ENCODE measurements at regions of chr10 and their contacts with region 1.

Region 1: DNA sequence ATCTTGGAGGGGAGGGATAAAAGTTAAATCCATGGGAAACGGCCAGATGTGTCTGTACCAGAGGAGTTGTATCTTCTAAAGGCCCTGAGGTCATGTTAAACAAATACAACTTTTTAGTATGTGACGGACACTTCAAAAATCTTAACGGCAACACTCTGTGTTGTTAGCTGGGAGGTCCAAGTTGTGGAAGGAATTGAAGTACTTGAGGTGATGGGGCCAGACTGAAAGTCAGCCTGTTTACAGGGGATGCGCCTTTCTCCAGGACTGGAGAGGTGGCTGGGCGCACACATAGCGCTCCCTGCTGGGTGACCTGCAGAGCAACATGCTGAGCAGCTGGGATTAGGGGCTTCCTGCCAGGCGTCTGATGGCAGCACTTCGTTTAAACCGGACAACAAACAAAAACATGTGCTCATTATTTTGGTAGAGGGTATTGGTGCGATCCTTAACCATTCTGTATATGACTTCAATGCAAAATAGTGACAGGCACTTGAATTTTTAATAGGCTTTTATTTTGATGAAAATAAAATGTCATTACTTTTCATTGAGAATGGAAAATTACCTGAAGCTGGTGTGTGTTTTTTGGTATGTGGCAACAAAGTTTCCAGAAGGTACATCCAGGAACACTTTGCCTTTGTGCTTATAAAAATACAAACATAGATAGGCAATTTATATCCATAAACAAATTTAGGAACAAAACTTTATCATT is 198.2 kb downstream of the MLLT10 start:
- DNase-seq: peak; percentile 81
- H3K4me3 ChIP-seq: peak overlapping the region in 1 of 2 experiments; percentile 26; a peak in 1 of 4 replicates
- H3K27ac ChIP-seq: no peak overlapping the region
- H3K4me1 ChIP-seq: peaks cover 16 to 30% of the 10 kb centered on the region in 2 experiments; a peak in 3 of 4 replicates
- H3K27me3 ChIP-seq: no peaks in the 10 kb centered on the region
- CTCF ChIP-seq: peak; percentile 96
- EP300 ChIP-seq: no peak
- RAD21 ChIP-seq: peak; percentile 96

Region 2: DNA sequence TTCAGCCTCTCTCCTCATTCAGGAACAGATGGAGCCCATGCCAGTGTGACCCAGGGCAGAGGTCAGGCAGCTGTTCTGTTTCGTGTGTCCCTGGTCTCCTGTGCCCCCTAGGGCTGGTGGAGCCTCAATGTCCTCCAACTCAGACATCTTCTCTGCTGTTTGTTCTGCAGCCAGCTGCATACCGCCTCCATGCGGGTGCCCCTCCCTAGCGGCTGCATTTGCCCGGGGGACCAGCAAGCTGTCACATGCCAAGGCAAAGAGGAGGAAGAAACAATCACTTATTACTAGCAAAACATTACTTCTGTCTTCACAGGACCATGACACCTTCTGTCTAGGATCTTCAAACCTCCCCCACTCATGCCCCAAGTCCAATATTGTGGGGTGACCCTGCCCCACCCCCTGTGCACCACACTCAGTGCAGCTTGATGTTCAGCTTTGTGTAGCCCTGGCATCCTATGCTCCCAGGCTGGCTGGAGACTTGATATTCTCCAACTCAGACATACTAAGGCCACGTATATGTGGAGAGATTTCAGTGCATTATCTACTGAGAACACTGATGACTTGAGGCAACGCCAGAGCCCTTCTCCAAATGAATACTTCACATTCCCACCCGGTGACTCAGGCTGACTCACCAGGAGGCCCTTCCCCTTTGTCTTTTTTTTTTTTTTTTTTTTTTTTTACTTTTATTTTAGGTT is 395.6 kb before region 1 on chr10:
- CTCF ChIA-PET with region 1: no interaction called
- POLR2A ChIA-PET with region 1: no interaction called
- DNase-seq: no peak
- H3K4me3 ChIP-seq: 0 out of 4 replicates have a peak overlapping the region, but pooled peaks of 1 of the 2 experiments have one; percentile 32
- H3K27ac ChIP-seq: peak overlapping the region; percentile 51 to 93
- H3K4me1 ChIP-seq: peaks cover 5 to 30% of the 10 kb centered on the region in 2 experiments; a peak in 3 of 4 replicates
- H3K27me3 ChIP-seq: no peaks in the 10 kb centered on the region
- CTCF ChIP-seq: 0 out of 2 replicates have a peak, but pooled peaks have one; percentile 16
- EP300 ChIP-seq: peak in 1 of 2 experiments; percentile 77; a peak in 2 of 4 replicates
- RAD21 ChIP-seq: 0 out of 2 replicates have a peak, but pooled peaks have one; percentile 6

Region 3: DNA sequence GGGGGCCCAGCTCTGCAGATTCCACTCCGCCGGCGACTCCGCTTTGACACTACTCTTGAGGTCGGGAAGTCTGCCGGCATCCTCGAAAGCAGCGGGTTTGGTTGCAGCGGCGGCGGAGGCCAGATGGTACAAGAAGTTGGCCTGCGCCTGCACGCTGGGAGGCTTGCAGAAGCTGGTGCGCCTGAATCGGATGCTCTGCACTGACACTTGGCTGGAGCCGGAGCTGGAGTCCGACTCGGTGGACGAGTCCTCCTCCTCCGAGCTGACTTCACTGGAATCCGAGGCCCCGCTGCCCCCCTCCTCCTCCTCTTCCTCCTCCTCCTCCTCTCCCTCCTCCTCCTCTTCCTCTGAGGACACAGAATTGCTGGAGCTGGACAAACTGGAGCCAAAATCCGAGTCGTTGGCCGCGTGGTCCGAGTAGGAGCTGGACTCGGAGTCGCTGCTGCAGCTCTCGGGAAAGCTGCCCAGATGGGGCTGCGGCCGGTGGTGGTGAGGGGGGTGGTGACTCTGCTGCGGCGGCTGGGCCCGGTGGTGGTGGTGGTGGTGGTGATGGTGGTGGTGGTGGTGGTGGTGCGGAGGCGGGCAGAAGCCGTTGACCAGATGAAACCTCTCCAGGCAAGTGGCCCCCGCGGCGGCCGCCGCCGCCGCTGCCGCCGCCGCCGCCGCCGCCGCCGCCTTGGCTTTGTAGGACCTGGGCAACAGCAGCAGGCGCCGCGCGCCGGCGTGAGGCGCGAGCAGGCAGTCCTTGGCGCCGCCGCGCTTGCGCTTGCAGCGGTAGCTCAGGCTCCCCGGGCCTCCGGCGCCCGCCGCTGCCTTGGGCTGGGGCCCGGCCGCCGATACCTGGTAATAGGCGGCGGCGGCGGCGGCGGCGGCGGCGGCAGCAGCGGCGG is 215.7 kb before region 1 on chr10:
- CTCF ChIA-PET with region 1: interaction called, 22 read pairs
- POLR2A ChIA-PET with region 1: no interaction called
- DNase-seq: peak; percentile 67
- H3K4me3 ChIP-seq: peak overlapping the region; percentile 53 to 64
- H3K27ac ChIP-seq: peak overlapping the region; percentile 44 to 99; a peak in 3 of 4 replicates
- H3K4me1 ChIP-seq: peaks cover 24 to 25% of the 10 kb centered on the region in 2 experiments; a peak in 3 of 4 replicates
- H3K27me3 ChIP-seq: no peaks in the 10 kb centered on the region
- CTCF ChIP-seq: no peak
- EP300 ChIP-seq: no peak
- RAD21 ChIP-seq: no peak

Region 4: DNA sequence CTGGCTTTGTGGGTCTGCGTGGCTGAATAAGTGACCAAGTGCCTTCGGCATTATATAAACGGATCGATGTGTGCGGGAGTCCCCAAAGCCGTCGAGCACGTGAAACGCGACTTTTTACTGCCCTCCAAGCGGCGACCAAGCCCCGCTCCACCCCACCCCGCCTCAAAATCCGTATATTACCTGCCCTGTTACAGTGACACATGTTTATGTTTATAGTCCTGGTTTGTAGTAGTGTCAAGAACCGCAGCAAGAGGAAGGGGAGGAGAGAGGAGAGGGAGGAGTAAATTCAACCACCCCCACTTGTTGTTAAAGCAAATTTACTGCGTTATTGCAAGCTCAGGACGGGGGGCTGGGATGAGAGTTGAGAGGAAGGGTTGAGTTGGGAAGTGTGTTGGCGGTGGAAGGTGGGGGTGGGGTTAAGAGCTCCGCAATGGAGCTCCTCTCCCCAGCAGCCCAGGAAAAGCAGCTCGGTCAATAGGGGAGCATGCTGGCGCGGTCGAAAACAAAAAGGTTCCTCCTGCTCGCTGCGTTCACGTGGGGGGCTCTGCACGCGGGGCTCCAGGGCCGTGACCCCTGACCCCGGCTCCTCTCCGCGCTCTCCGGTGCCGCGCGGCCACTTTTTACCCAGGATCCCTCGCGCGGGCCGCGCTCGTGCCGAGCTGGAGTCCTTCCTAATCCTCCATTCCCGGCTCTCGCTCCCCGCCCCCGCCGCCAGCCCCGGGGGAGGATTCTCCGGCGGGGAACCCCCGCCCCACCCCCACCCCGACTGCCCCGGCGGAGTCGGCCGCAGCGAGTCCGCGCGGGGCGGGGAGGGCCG is 206.6 kb before region 1 on chr10 and contains the start of gene SKIDA1:
- CTCF ChIA-PET with region 1: interaction called, 22 read pairs
- POLR2A ChIA-PET with region 1: interaction called, 6 read pairs
- DNase-seq: peak; percentile 86
- H3K4me3 ChIP-seq: peak within 1 kb of the TSS; percentile 70 to 76
- H3K27ac ChIP-seq: peak within 1 kb of the TSS; percentile 98 to 99
- H3K4me1 ChIP-seq: peaks cover 28 to 38% of the 10 kb centered on the region in 2 experiments; a peak in 3 of 4 replicates
- H3K27me3 ChIP-seq: no peaks in the 10 kb centered on the region
- CTCF ChIP-seq: no peak
- EP300 ChIP-seq: peak in 1 of 2 experiments; percentile 30; a peak in 1 of 4 replicates
- RAD21 ChIP-seq: no peak
- polyA plus RNA-seq, gene SKIDA1: 0.38 and 0.47 TPM in 2 replicates

Region 5: DNA sequence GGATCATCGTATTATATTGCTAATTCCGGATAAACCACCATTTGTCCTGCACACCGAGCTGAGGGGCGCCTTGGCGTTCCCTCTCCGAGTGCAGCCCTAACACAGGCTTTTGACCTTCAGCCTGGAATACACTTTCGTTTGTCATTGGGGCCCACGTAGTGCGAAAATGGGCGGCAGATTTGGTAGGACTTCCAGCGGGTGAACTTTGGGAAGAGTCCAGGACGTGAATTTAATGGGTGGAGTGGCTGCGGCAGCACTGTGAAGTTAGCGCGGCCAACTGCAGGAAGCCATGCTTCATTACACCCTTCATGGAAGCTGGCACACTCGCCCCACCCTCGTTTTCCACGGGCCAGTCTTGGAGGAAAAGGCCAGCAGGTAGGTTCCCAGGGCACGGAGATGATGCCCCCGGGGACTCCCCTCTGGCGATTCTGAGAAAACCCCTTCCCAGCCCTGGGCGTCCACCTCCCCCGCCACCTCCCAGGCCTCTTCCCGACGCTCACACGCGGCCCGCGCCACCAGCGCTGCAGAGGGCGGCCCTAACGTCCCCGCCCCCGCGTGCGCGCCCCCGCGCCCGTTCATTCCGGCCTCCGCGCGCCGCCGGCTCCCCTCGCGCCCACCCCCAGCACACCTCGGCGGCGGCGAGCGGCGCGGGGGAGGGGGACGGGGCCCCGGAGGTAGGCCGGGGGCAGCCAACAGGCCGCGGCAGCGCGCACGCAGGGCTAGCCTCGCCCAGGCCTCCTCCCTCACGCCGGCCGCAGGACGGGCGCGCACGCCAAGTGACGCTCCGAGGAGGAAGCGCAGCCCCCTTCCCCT is 198.5 kb before region 1 on chr10 and contains the start of gene MLLT10:
- CTCF ChIA-PET with region 1: interaction called, 15 read pairs
- POLR2A ChIA-PET with region 1: interaction called, 5 read pairs
- DNase-seq: peak; percentile 96
- H3K4me3 ChIP-seq: peak within 1 kb of the TSS; percentile 74
- H3K27ac ChIP-seq: peak within 1 kb of the TSS; percentile 94 to 99
- H3K4me1 ChIP-seq: peaks cover 15 to 32% of the 10 kb centered on the region in 2 experiments; a peak in 3 of 4 replicates
- H3K27me3 ChIP-seq: no peaks in the 10 kb centered on the region
- CTCF ChIP-seq: peak; percentile 44
- EP300 ChIP-seq: peak in 1 of 2 experiments; percentile 29; a peak in 1 of 4 replicates
- RAD21 ChIP-seq: no peak
- polyA plus RNA-seq, gene MLLT10: 23.9 and 26.0 TPM in 2 replicates

Region 6: GRCh38 chr10:21953585-21954057 is 221.4 kb after region 1 on chr10:
- CTCF ChIA-PET with region 1: interaction called, 14 read pairs
- POLR2A ChIA-PET with region 1: no interaction called
- DNase-seq: peak; percentile 54
- H3K4me3 ChIP-seq: no peak overlapping the region; a peak in 1 of 4 replicates
- H3K27ac ChIP-seq: no peak overlapping the region
- H3K4me1 ChIP-seq: peaks cover 0 to 3% of the 10 kb centered on the region in 2 experiments; a peak in 2 of 4 replicates
- H3K27me3 ChIP-seq: no peaks in the 10 kb centered on the region
- CTCF ChIP-seq: peak; percentile 65
- EP300 ChIP-seq: no peak
- RAD21 ChIP-seq: peak; percentile 75